Activated naive CD4-positive, alpha-beta T cell treated with anti-CD3 and anti-CD28 coated beads for 36 hours (primary cell): ENCODE measurements at regions of chr6 and their contacts with region 1.

Region 1: DNA sequence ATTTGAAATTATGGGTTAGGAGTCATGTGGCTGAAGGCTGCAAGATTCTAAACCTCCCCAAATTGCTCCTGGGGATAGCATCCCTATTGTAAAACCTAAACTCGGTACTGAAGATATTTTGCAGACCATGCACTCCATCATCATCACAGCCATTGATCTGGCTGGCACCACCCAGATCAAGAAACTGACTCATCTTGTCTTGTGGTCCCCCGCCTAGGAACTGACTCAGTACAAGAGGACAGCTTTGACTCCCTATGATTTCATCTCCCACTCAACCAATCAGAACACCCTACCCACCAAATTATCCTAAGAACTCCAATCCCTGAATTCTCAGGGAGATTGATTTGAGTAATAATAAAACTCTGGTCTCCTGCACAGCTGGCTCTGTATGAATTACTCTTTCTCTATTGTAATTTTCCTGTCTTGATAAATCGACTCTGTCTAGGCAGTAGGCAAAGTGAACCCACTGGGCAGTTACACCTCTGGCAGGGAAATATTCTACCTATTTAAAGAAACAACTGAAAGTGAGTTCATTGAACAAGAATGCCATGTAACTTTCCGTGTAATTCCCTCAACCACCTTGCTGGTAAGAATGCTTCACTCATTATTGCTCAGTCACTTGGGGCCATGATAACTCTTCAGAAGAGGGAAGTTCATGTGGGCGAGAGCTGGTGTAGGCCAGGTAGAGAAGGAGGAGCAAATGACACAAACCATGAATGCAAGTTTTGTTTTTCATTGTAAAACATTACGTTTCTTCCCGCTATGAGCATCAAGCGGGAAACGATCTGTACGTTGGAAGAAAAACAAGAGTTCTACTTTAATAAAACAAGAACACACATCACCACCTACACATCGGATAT is 602.9 kb upstream of the ARID1B start:
- DNase-seq: peak; percentile 72
- H3K4me3 Mint-ChIP-seq: no peak overlapping the region
- H3K27ac Mint-ChIP-seq: peak overlapping the region; percentile 25
- H3K4me1 Mint-ChIP-seq: peaks cover 18% of the 10 kb centered on the region
- H3K27me3 Mint-ChIP-seq: no peaks in the 10 kb centered on the region

Region 2: GRCh38 chr6:156250593-156250992 is 76.3 kb after region 1 on chr6:
- CTCF ChIA-PET with region 1: no interaction called
- intact Hi-C with region 1: loop called (anchors 1 kb)
- DNase-seq: peak; percentile 72
- H3K4me3 Mint-ChIP-seq: no peak overlapping the region
- H3K27ac Mint-ChIP-seq: peak overlapping the region; percentile 74
- H3K4me1 Mint-ChIP-seq: peaks cover 29% of the 10 kb centered on the region
- H3K27me3 Mint-ChIP-seq: no peaks in the 10 kb centered on the region